ENCODE measurements at regions of chr3 and their contacts with region 1.

Region 1: GRCh38 chr3:13427662-13428603 is 7.8 kb upstream of the NUP210 start:
- DNase-seq: peak in 10 of 14 experiments; percentile 20 to 82 (median 48)
- ATAC-seq: peak; percentile 99
- H3K4me3 ChIP-seq: no peak overlapping the region
- H3K4me3 Mint-ChIP-seq: peak overlapping the region; percentile 59
- H3K27ac ChIP-seq: peak overlapping the region; percentile 64 to 69
- H3K27ac Mint-ChIP-seq: peak overlapping the region; percentile 86
- H3K4me1 ChIP-seq: peaks cover 50% of the 10 kb centered on the region
- H3K4me1 Mint-ChIP-seq: peaks cover 39% of the 10 kb centered on the region
- H3K27me3 ChIP-seq: no peaks in the 10 kb centered on the region
- H3K27me3 Mint-ChIP-seq: no peaks in the 10 kb centered on the region
- CTCF ChIP-seq: no peak

Region 2: GRCh38 chr3:13414040-13414729 is 13.7 kb before region 1 on chr3:
- CTCF ChIA-PET with region 1: interaction called, 6 read pairs
- POLR2A ChIA-PET with region 1: interaction called, 62 read pairs
- intact Hi-C with region 1: loop called in 1 of 2 experiments (anchors 2 kb)
- DNase-seq: peak; percentile 38 to 87 (median 63)
- ATAC-seq: peak; percentile 91
- H3K4me3 ChIP-seq: peak overlapping the region; percentile 30
- H3K4me3 Mint-ChIP-seq: peak overlapping the region; percentile 93
- H3K27ac ChIP-seq: peak overlapping the region; percentile 74 to 81
- H3K27ac Mint-ChIP-seq: peak overlapping the region; percentile 91
- H3K4me1 ChIP-seq: peaks cover 85% of the 10 kb centered on the region
- H3K4me1 Mint-ChIP-seq: peaks cover 63% of the 10 kb centered on the region
- H3K27me3 ChIP-seq: no peaks in the 10 kb centered on the region
- H3K27me3 Mint-ChIP-seq: no peaks in the 10 kb centered on the region
- CTCF ChIP-seq: no peak